Transverse colon (tissue), 4 donors: ENCODE measurements at regions of chr7 and their contacts with region 1.

Region 1: DNA sequence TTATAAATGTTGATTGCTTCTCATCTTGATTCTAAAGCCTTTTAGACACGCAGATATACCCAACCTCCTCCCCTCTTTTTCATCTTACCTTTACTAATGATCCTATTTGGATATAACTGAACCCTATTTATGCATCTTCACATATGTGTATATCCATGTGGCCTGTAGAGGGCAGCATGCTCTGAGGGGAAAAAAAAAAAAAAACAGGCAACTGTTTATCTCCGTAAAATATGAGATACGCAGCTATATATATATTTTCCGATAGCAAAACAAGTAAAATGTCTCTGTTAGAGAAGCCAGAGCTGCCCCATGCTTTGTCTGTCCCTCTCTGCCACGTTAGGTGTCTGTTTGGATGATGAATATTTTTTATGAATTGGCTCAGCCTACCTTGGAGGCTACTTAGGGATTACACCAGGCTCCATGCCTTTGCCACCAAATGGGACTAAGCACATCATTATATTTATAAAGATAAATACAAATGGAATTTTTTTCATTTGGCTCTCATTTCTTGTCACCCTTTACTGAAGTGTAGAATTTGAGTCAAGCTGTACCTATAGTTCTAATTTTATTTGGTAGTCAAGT is 174.8 kb upstream of the FZD1 start:
- DNase-seq: no peak
- H3K4me3 ChIP-seq: peak overlapping the region in 2 of 4 donors; percentile 15 to 30
- H3K27ac ChIP-seq: no peak overlapping the region
- H3K4me1 ChIP-seq: no peaks in the 10 kb centered on the region
- H3K27me3 ChIP-seq: no peaks in the 10 kb centered on the region
- CTCF ChIP-seq: peak; percentile 51 to 80 (median 72)
- EP300 ChIP-seq: no peak
- POLR2A ChIP-seq: no peak

Region 2: GRCh38 chr7:90980545-90980944 is 108.9 kb before region 1 on chr7:
- in situ Hi-C with region 1: no loop called
- intact Hi-C with region 1: no loop called
- DNase-seq: no peak
- H3K4me3 ChIP-seq: no peak overlapping the region
- H3K27ac ChIP-seq: no peak overlapping the region
- H3K4me1 ChIP-seq: no peaks in the 10 kb centered on the region
- H3K27me3 ChIP-seq: no peaks in the 10 kb centered on the region
- CTCF ChIP-seq: no peak
- EP300 ChIP-seq: no peak
- POLR2A ChIP-seq: no peak

Region 3: GRCh38 chr7:91182819-91183764 is 93.6 kb after region 1 on chr7:
- in situ Hi-C with region 1: no loop called
- intact Hi-C with region 1: no loop called
- DNase-seq: no peak
- H3K4me3 ChIP-seq: no peak overlapping the region
- H3K27ac ChIP-seq: no peak overlapping the region
- H3K4me1 ChIP-seq: no peaks in the 10 kb centered on the region
- H3K27me3 ChIP-seq: no peaks in the 10 kb centered on the region
- CTCF ChIP-seq: no peak
- EP300 ChIP-seq: no peak
- POLR2A ChIP-seq: no peak

Region 4: DNA sequence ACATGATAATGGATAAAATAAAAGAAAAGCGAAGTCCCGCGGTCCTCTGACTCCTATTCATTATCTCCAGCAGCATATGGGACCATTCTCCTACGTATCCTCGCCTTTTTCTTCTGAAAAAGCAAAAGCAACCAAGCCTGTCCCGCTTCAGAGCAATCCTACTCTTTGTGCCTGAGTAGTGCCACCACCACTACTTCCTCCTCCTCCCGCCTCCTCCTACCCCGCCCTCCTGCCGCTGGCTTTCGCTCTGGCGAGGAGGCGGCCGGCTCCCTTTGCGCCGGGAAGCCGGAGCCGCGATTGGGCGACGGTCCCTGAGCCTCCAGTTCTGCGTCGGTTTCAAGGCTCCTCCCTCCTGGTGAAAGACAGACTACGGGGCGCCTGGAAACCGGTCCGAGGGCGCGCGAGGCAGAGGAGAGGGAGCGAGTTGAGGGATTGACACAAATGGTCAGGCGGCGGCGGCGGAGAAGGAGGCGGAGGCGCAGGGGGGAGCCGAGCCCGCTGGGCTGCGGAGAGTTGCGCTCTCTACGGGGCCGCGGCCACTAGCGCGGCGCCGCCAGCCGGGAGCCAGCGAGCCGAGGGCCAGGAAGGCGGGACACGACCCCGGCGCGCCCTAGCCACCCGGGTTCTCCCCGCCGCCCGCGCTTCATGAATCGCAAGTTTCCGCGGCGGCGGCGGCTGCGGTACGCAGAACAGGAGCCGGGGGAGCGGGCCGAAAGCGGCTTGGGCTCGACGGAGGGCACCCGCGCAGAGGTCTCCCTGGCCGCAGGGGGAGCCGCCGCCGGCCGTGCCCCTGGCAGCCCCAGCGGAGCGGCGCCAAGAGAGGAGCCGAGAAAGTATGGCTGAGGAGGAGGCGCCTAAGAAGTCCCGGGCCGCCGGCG is 174.8 kb after region 1 on chr7 and contains the start of gene FZD1:
- in situ Hi-C with region 1: no loop called
- intact Hi-C with region 1: loop called (anchors 10 kb)
- DNase-seq: peak; percentile 96
- H3K4me3 ChIP-seq: peak within 1 kb of the TSS; percentile 90 to 96 (median 93)
- H3K27ac ChIP-seq: peak within 1 kb of the TSS; percentile 97 to 99 (median 98)
- H3K4me1 ChIP-seq: peaks cover 0 to 37% (median 19%) of the 10 kb centered on the region in 4 donors
- H3K27me3 ChIP-seq: no peaks in the 10 kb centered on the region
- CTCF ChIP-seq: peak in 2 of 5 experiments; percentile 13 to 20
- EP300 ChIP-seq: no peak
- POLR2A ChIP-seq: peak; percentile 51
- total RNA-seq, gene FZD1: 5.6 to 9.6 (median 8.1) TPM

Region 5: GRCh38 chr7:91636129-91636724 is 546.8 kb after region 1 on chr7:
- in situ Hi-C with region 1: loop called in 1 of 4 experiments (anchors 25 kb)
- intact Hi-C with region 1: no loop called
- DNase-seq: no peak
- H3K4me3 ChIP-seq: no peak overlapping the region
- H3K27ac ChIP-seq: no peak overlapping the region
- H3K4me1 ChIP-seq: peaks cover 0 to 4% (median 0%) of the 10 kb centered on the region in 4 donors
- H3K27me3 ChIP-seq: no peaks in the 10 kb centered on the region
- CTCF ChIP-seq: peak in 4 of 5 experiments; percentile 11 to 31 (median 21)
- EP300 ChIP-seq: no peak
- POLR2A ChIP-seq: no peak

Region 6: GRCh38 chr7:91784463-91784862 is 695.0 kb after region 1 on chr7:
- in situ Hi-C with region 1: loop called in 3 of 4 experiments (anchors 10 to 25 kb)
- intact Hi-C with region 1: loop called (anchors 10 kb)
- DNase-seq: no peak
- H3K4me3 ChIP-seq: no peak overlapping the region
- H3K27ac ChIP-seq: no peak overlapping the region
- H3K4me1 ChIP-seq: peaks cover 0 to 7% (median 0%) of the 10 kb centered on the region in 4 donors
- H3K27me3 ChIP-seq: no peaks in the 10 kb centered on the region
- CTCF ChIP-seq: peak; percentile 41 to 59 (median 44)
- EP300 ChIP-seq: no peak
- POLR2A ChIP-seq: no peak